Sciatic nerve (tissue), 2 donors: ENCODE measurements at regions of chr3 and their contacts with region 1.

Region 1: DNA sequence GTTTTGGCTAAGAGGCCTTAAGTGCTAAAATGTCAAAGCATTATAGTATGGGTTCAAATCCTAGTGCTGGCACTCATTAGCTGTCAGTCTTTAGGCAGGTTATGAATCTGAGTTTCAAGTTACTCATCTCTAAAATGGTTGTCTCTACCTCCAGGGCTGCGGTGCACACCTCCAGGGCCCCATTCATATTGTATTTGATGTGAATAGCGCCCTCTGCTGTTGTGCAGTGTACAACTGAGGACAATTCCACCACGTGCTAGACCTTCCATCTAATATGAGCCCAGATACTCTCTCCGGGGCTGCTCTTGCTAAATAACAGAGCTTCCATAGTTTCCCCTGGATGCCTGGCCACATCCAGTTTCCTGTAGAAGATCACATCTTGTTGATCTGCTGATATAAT is 54.3 kb downstream of the OXNAD1 start:
- DNase-seq: no peak
- ATAC-seq: no peak

Region 2: GRCh38 chr3:14962762-14963161 is 1356.5 kb before region 1 on chr3:
- intact Hi-C with region 1: loop called (anchors 5 kb)
- DNase-seq: no peak
- ATAC-seq: no peak